Activated T-helper 1 cell treated with anti-CD3 and anti-CD28 coated beads, Interleukin-12 subunit alpha, Interleukin-12 subunit beta, Interleukin-2, Interleukin-4 antibody, amounts not matched to agents 30 ng/mL and 10 ng/mL and 1 ng/mL, durations not matched to agents 14 hours and 24 hours and 36 hours (primary cell): ENCODE measurements at regions of chr10 and their contacts with region 1.

Region 1: GRCh38 chr10:102114861-102115618 is 5.1 kb downstream of the LDB1 start:
- DNase-seq: peak; percentile 73
- H3K4me3 Mint-ChIP-seq: peak overlapping the region; percentile 85
- H3K27ac Mint-ChIP-seq: peak overlapping the region; percentile 98
- H3K4me1 Mint-ChIP-seq: peaks cover 71% of the 10 kb centered on the region
- H3K27me3 Mint-ChIP-seq: no peaks in the 10 kb centered on the region

Region 2: GRCh38 chr10:101830322-101831168 is 284.5 kb before region 1 on chr10:
- intact Hi-C with region 1: loop called (anchors 1 kb)
- DNase-seq: peak; percentile 85
- H3K4me3 Mint-ChIP-seq: peak overlapping the region; percentile 79
- H3K27ac Mint-ChIP-seq: peak overlapping the region; percentile 94
- H3K4me1 Mint-ChIP-seq: peaks cover 51% of the 10 kb centered on the region
- H3K27me3 Mint-ChIP-seq: no peaks in the 10 kb centered on the region

Region 3: DNA sequence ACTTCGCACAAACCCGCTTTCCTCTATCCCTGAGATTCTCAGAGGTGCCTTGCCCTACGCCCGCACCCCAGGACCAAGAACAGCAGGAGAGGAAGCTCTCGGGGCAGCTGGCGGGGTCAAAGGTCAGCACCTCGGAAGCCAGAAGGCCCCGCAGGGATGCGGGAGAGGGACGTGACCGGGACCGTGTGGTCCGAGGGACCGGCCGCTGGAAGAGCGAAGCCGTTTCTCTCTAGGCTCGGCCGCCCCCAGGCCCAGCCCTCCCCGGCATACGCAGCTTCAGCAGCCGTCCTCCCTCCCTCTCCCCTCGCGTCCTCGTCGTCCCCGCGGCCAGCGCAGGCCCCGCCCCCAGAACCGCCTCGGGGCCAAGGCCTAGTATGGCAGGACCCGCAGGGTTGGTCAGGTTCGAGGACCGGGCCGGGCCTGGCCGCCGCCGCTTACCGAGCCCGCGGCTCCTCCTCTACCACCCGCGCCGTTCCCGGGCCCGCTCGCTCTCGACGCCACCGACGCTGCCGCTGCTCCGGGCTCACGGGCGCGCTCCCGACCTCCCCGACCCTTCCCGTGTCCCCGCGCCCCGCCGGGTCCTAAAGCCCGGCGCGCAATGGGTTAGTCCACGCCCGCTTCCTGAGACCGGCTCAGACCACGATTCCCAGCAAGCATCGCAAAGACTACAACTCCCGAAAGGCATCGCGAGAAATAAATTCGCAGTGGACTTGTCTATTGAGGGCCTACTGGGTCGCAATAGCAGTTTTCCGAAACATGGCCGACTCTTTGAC is 59.2 kb before region 1 on chr10 and contains the start of gene ARMH3:
- intact Hi-C with region 1: loop called (anchors 1 kb)
- DNase-seq: peak; percentile 90
- H3K4me3 Mint-ChIP-seq: peak within 1 kb of the TSS; percentile 89
- H3K27ac Mint-ChIP-seq: peak within 1 kb of the TSS; percentile 94
- H3K4me1 Mint-ChIP-seq: peaks cover 31% of the 10 kb centered on the region
- H3K27me3 Mint-ChIP-seq: no peaks in the 10 kb centered on the region
- total RNA-seq, gene ARMH3: 21.5 and 24.8 TPM in 2 replicates

Region 4: GRCh38 chr10:102064868-102065560 is 50.0 kb before region 1 on chr10 and contains the start of gene HPS6:
- intact Hi-C with region 1: loop called (anchors 2 kb)
- DNase-seq: peak; percentile 89
- H3K4me3 Mint-ChIP-seq: peak within 1 kb of the TSS; percentile 89
- H3K27ac Mint-ChIP-seq: peak within 1 kb of the TSS; percentile 90
- H3K4me1 Mint-ChIP-seq: peaks cover 17% of the 10 kb centered on the region
- H3K27me3 Mint-ChIP-seq: no peaks in the 10 kb centered on the region
- total RNA-seq, gene HPS6: 24.5 and 26.8 TPM in 2 replicates

Region 5: DNA sequence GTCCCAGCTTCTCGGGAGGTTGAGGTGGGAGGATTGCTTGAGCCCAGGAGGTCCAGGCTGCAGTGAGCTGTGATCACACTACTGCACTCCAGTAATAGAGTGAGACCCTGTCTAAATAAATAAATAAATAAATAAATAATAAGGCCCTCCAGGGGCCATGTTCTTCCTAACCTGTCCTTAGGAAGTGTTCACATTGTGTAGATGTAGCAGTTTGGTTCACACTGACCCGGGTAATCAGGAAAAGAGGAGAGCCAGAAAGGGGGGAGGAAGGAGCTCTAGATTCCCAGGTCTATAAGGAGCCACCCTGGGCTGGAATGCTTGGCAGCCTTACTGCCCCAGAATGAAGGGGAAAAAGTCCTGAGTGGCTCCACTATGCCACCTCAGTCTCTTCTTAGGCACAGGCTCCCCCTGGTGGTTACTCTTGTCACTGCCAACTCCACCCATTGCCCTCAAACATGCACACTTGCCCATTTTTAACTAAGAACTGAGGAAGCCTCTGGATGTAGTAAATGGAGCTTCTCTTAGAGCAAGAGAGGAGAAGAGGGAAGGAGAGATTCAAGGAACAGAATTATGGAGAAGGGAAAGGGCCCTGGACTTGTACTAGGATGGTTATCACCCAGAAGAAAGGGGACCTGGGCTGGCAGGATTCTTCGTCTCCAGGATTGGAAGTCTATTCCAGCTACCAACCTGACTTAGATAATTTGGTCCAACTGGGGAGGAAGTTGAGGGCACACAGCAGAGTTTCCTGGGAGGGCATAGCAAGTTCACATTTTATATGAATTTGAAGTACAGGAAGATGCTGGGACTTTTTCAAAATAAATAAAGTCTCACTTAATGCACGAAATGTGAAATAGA is 42.1 kb before region 1 on chr10:
- intact Hi-C with region 1: loop called (anchors 2 kb)
- DNase-seq: peak; percentile 67
- H3K4me3 Mint-ChIP-seq: no peak overlapping the region
- H3K27ac Mint-ChIP-seq: no peak overlapping the region
- H3K4me1 Mint-ChIP-seq: peaks cover 6% of the 10 kb centered on the region
- H3K27me3 Mint-ChIP-seq: no peaks in the 10 kb centered on the region